B cell (primary cell): ENCODE measurements at regions of chr6 and their contacts with region 1.

Region 1: DNA sequence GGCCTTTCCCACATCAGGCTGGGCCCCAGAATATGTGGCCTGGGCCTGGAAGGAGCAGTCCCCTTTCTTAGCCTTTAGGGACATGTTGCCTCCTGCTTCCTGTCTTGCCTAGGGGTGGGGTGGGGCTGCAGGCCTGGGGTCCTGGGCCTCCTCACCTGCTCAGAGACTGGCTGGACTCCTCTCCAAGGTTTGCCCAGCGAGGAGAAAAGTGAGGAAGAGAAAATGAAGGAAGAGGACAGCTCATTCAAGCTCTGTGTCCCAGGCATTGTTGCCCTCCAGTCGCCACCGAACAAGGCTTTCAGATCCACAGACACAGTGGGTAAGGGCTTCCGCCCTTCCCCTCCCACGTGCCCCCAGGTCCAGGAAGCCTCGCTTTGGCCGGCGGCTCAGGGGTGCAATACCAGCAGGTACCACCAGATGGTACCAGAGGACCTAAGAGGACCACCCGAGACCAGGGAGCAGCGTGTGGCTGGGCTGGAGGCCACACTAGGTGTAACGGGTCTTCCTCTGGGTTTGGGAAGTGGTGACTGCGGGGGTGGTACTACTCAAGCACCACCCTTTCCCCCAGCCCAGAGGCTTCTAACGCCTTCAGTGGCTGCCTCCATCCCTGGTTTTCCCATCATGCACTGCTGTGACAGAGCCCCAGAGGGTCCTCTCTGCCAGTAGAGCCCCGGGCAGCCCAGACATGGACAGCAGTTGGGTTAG is 5.5 kb upstream of the BAK1 start:
- DNase-seq: peak; percentile 93
- ATAC-seq: peak; percentile 94
- H3K4me3 ChIP-seq: peak overlapping the region in 2 of 5 experiments; percentile 12 to 17
- H3K4me3 Mint-ChIP-seq: peak overlapping the region; percentile 61
- H3K27ac ChIP-seq: peak overlapping the region; percentile 46 to 60
- H3K27ac Mint-ChIP-seq: peak overlapping the region; percentile 91
- H3K4me1 ChIP-seq: peaks cover 24 to 34% of the 10 kb centered on the region in 2 donors
- H3K4me1 Mint-ChIP-seq: peaks cover 34% of the 10 kb centered on the region
- H3K27me3 ChIP-seq: no peaks in the 10 kb centered on the region
- H3K27me3 Mint-ChIP-seq: no peaks in the 10 kb centered on the region
- CTCF ChIP-seq: peak; percentile 99

Region 2: GRCh38 chr6:33607784-33608161 is 22.2 kb after region 1 on chr6:
- CTCF ChIA-PET with region 1: interaction called, 330 read pairs
- POLR2A ChIA-PET with region 1: interaction called, 8 read pairs
- intact Hi-C with region 1: loop called (anchors 1 kb)
- DNase-seq: peak; percentile 70
- ATAC-seq: peak; percentile 87
- H3K4me3 ChIP-seq: no peak overlapping the region
- H3K4me3 Mint-ChIP-seq: no peak overlapping the region
- H3K27ac ChIP-seq: no peak overlapping the region
- H3K27ac Mint-ChIP-seq: no peak overlapping the region
- H3K4me1 ChIP-seq: peaks cover 7 to 23% of the 10 kb centered on the region in 2 donors
- H3K4me1 Mint-ChIP-seq: peaks cover 30% of the 10 kb centered on the region
- H3K27me3 ChIP-seq: no peaks in the 10 kb centered on the region
- H3K27me3 Mint-ChIP-seq: no peaks in the 10 kb centered on the region
- CTCF ChIP-seq: peak; percentile 74

Region 3: DNA sequence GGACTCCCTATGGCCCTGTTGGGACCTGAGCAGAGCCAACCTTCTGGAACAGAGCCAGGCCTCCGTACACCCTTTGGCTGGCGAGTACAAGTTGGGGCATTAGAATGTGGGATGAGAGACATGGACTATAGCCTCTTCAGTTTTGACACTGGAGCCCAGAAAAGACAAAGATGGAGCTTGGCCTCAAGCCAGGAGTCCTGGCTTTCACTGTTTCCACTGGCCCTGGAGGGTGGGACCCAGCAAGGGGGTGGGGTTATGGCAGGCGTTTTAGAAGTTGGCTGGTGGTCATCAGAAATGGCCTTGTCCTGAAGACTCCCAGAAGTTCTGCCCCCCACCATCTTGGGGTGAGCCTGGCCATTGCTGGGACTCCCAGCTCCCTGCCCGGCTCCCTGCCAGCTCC is 57.3 kb after region 1 on chr6:
- CTCF ChIA-PET with region 1: interaction called, 3 read pairs
- POLR2A ChIA-PET with region 1: interaction called, 10 read pairs
- intact Hi-C with region 1: no loop called
- DNase-seq: no peak
- ATAC-seq: no peak
- H3K4me3 ChIP-seq: no peak overlapping the region
- H3K4me3 Mint-ChIP-seq: no peak overlapping the region
- H3K27ac ChIP-seq: no peak overlapping the region
- H3K27ac Mint-ChIP-seq: no peak overlapping the region
- H3K4me1 ChIP-seq: no peaks in the 10 kb centered on the region
- H3K4me1 Mint-ChIP-seq: peaks cover 8% of the 10 kb centered on the region
- H3K27me3 ChIP-seq: no peaks in the 10 kb centered on the region
- H3K27me3 Mint-ChIP-seq: no peaks in the 10 kb centered on the region
- CTCF ChIP-seq: no peak

Region 4: DNA sequence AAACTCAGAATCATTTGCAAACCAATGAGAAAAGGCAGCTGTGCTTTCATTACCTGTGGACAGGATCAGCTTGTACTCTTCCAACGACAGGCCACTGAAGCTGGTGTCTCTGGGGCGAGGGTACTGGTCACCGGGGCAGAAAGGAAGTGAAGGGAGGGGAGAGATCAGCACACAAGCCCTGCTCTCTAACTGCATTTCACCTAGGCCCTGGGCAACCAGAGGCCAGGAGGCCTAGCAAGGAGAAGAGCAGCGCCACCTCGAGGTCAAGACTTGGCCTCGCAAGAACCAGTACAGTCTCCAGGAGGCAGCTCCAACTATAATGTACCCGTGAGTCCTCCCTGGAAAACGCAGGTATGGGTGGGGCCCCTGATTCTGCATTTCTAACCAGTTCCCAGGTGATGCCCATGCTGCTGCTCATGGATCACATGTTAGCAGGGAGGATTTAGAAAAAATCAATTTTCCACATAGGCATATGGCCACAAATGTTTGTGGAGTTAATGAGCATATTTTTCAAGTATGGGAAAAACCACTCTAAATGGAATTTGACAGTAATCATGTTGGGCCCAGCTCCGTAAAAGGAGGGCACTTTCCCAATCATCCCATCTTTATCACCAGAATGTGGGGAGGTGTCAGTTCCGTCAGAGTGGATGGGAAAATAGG is 115.0 kb after region 1 on chr6:
- CTCF ChIA-PET with region 1: interaction called, 213 read pairs
- POLR2A ChIA-PET with region 1: interaction called, 5 read pairs
- intact Hi-C with region 1: loop called (anchors 1 kb)
- DNase-seq: peak; percentile 86
- ATAC-seq: peak; percentile 64
- H3K4me3 ChIP-seq: no peak overlapping the region
- H3K4me3 Mint-ChIP-seq: peak overlapping the region; percentile 21
- H3K27ac ChIP-seq: peak overlapping the region in 1 of 2 donors; percentile 17
- H3K27ac Mint-ChIP-seq: peak overlapping the region; percentile 82
- H3K4me1 ChIP-seq: peaks cover 53 to 57% of the 10 kb centered on the region in 2 donors
- H3K4me1 Mint-ChIP-seq: peaks cover 66% of the 10 kb centered on the region
- H3K27me3 ChIP-seq: no peaks in the 10 kb centered on the region
- H3K27me3 Mint-ChIP-seq: no peaks in the 10 kb centered on the region
- CTCF ChIP-seq: peak; percentile 81

Region 5: GRCh38 chr6:33744001-33744848 is 158.7 kb after region 1 on chr6:
- CTCF ChIA-PET with region 1: interaction called, 10 read pairs
- POLR2A ChIA-PET with region 1: no interaction called
- intact Hi-C with region 1: loop called (anchors 1 kb)
- DNase-seq: peak; percentile 81
- ATAC-seq: peak; percentile 81
- H3K4me3 ChIP-seq: no peak overlapping the region
- H3K4me3 Mint-ChIP-seq: no peak overlapping the region
- H3K27ac ChIP-seq: no peak overlapping the region
- H3K27ac Mint-ChIP-seq: peak overlapping the region; percentile 23
- H3K4me1 ChIP-seq: peaks cover 0 to 3% of the 10 kb centered on the region in 2 donors
- H3K4me1 Mint-ChIP-seq: peaks cover 3% of the 10 kb centered on the region
- H3K27me3 ChIP-seq: peaks cover 0 to 9% (median under 1%) of the 10 kb centered on the region in 4 experiments
- H3K27me3 Mint-ChIP-seq: peaks cover 24% of the 10 kb centered on the region
- CTCF ChIP-seq: peak; percentile 86

Region 6: DNA sequence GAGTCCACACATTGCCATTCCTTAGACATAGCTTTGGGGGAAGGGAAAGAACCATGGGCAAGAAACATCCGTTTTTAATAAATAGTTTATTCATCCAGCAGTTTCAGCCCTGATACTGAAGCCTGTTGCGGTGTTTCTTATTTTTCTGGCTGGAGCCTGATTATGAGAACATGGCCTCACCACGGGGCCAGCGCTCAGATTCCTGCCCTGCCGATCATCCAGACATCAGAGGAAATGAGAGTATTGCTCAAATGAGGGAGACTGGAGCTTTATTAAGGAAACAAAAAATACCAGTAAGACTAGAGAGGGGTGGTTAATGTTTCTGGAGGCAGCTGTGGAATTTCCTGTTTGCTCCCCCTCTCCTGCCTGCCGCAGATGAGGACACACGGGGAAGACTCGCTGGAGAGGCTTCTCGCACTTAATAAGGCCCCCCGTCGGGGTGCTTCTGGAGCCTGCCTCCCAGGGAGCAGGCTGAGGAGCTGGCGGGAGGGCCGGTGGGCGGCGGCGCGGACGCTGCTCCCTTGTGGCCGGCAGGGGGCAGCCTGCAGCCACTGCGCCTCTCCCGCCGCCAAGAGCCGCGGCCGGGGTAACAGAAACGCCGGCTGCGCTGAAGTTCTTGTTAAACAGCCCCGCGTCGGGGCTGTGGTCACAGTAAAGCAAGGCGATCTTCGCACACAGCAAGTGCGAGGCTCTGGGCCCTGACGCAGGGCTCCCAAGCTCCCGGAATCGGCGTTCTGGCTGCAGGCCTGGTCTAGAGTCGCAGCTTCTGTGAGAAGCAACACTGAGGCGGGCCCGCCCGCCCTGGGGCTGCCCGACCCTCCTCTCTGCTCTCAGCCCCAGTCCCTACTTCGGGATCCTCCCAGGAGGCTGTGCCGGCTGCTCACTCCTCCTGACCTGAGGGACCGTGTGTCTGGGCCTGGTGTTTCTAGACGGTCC is 185.9 kb after region 1 on chr6:
- CTCF ChIA-PET with region 1: interaction called, 16 read pairs
- POLR2A ChIA-PET with region 1: no interaction called
- intact Hi-C with region 1: no loop called
- DNase-seq: peak; percentile 77
- ATAC-seq: peak; percentile 76
- H3K4me3 ChIP-seq: no peak overlapping the region
- H3K4me3 Mint-ChIP-seq: no peak overlapping the region
- H3K27ac ChIP-seq: no peak overlapping the region
- H3K27ac Mint-ChIP-seq: no peak overlapping the region
- H3K4me1 ChIP-seq: peaks cover 0 to 6% of the 10 kb centered on the region in 2 donors
- H3K4me1 Mint-ChIP-seq: peaks cover 10% of the 10 kb centered on the region
- H3K27me3 ChIP-seq: peaks cover 0 to 7% (median 0%) of the 10 kb centered on the region in 4 experiments
- H3K27me3 Mint-ChIP-seq: peaks cover 12% of the 10 kb centered on the region
- CTCF ChIP-seq: peak; percentile 94

Region 7: GRCh38 chr6:34154668-34155447 is 569.3 kb after region 1 on chr6:
- CTCF ChIA-PET with region 1: interaction called, 3 read pairs
- POLR2A ChIA-PET with region 1: no interaction called
- intact Hi-C with region 1: loop called (anchors 2 kb)
- DNase-seq: peak; percentile 76
- ATAC-seq: peak; percentile 94
- H3K4me3 ChIP-seq: peak overlapping the region in 3 of 5 experiments; percentile 33 to 39 (median 36)
- H3K4me3 Mint-ChIP-seq: peak overlapping the region; percentile 55
- H3K27ac ChIP-seq: no peak overlapping the region
- H3K27ac Mint-ChIP-seq: no peak overlapping the region
- H3K4me1 ChIP-seq: peaks cover 14 to 21% of the 10 kb centered on the region in 2 donors
- H3K4me1 Mint-ChIP-seq: peaks cover 16% of the 10 kb centered on the region
- H3K27me3 ChIP-seq: peaks cover 0 to 46% (median 18%) of the 10 kb centered on the region in 4 experiments
- H3K27me3 Mint-ChIP-seq: peaks cover 42% of the 10 kb centered on the region
- CTCF ChIP-seq: peak; percentile 99